ENCODE measurements at regions of chr17 and their contacts with region 1.

Region 1: GRCh38 chr17:12431188-12431587 is 234.5 kb upstream of the MYOCD start:
- DNase-seq: no peak
- ATAC-seq: no peak
- H3K4me3 ChIP-seq: no peak overlapping the region
- H3K4me3 Mint-ChIP-seq: no peak overlapping the region
- H3K27ac ChIP-seq: no peak overlapping the region
- H3K27ac Mint-ChIP-seq: no peak overlapping the region
- H3K4me1 ChIP-seq: no peaks in the 10 kb centered on the region
- H3K4me1 Mint-ChIP-seq: no peaks in the 10 kb centered on the region
- H3K27me3 ChIP-seq: no peaks in the 10 kb centered on the region
- H3K27me3 Mint-ChIP-seq: no peaks in the 10 kb centered on the region
- CTCF ChIP-seq: no peak

Region 2: DNA sequence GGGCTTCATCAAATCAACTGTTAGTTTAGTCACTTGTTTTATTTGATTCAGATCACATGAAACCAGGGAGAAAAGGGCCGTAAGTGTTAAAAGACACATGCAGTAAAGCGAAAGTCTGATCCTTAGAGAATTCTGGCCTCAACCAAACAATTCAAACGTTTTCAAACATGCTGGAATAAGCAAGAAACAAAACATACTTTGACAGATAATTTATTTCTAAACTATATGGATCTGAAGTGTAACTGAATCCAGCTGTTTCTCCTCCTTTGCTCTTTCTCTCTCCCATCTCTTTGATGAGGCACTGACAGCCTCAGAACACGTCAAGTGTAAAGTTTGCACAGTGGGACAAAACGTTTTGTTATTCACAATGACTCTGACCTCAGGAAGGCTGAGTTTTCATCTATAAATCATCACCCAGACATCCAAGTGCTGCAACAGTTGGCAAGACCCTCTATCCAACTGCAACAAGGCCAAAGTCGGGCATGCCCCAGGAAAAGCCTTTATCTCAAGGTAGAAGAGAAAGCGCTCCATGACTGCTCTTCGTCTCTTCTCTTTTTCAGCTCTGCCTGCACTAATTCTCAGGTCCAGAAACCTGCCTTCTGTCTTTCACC is 32.6 kb before region 1 on chr17:
- CTCF ChIA-PET with region 1: no interaction called
- POLR2A ChIA-PET with region 1: no interaction called
- intact Hi-C with region 1: loop called in 1 of 2 experiments (anchors 1 kb)
- DNase-seq: no peak
- ATAC-seq: no peak
- H3K4me3 ChIP-seq: no peak overlapping the region
- H3K4me3 Mint-ChIP-seq: no peak overlapping the region
- H3K27ac ChIP-seq: no peak overlapping the region
- H3K27ac Mint-ChIP-seq: no peak overlapping the region
- H3K4me1 ChIP-seq: no peaks in the 10 kb centered on the region
- H3K4me1 Mint-ChIP-seq: no peaks in the 10 kb centered on the region
- H3K27me3 ChIP-seq: no peaks in the 10 kb centered on the region
- H3K27me3 Mint-ChIP-seq: no peaks in the 10 kb centered on the region
- CTCF ChIP-seq: no peak

Region 3: GRCh38 chr17:12415031-12415430 is 16.2 kb before region 1 on chr17:
- CTCF ChIA-PET with region 1: no interaction called
- POLR2A ChIA-PET with region 1: no interaction called
- intact Hi-C with region 1: no loop called
- DNase-seq: no peak
- ATAC-seq: no peak
- H3K4me3 ChIP-seq: no peak overlapping the region
- H3K4me3 Mint-ChIP-seq: no peak overlapping the region
- H3K27ac ChIP-seq: no peak overlapping the region
- H3K27ac Mint-ChIP-seq: no peak overlapping the region
- H3K4me1 ChIP-seq: no peaks in the 10 kb centered on the region
- H3K4me1 Mint-ChIP-seq: no peaks in the 10 kb centered on the region
- H3K27me3 ChIP-seq: no peaks in the 10 kb centered on the region
- H3K27me3 Mint-ChIP-seq: no peaks in the 10 kb centered on the region
- CTCF ChIP-seq: no peak

Measured in CD4-positive, alpha-beta T cell (primary cell).